Activated CD4-positive, alpha-beta memory T cell treated with anti-CD3 and anti-CD28 coated beads for 36 hours (primary cell): ENCODE measurements at regions of chr17 and their contacts with region 1.

Region 1: DNA sequence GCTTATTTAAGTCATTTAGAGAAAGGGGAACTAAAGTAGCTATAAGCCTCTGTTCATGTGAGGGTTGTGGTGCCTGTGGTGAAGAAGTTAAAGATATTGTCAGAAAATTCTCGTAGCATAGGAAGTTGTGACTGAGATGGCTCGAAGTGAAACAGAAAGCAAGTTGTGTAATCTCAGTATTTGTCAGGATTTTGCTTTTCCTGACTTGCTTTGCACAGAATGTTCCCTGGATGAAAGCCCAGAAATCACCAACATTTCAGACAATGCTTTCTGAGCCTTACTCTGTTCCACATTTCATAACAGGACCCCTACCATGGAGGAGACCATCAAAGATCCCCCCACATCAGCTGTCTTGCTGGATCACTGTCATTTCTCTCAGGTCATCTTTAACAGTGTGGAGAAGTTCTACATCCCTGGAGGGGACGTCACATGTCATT is 10.6 kb downstream of the CALCOCO2 start:
- DNase-seq: peak; percentile 48
- H3K4me3 Mint-ChIP-seq: peak overlapping the region; percentile 46
- H3K27ac Mint-ChIP-seq: peak overlapping the region; percentile 45
- H3K4me1 Mint-ChIP-seq: peaks cover 48% of the 10 kb centered on the region
- H3K27me3 Mint-ChIP-seq: peaks cover 1% of the 10 kb centered on the region

Region 2: DNA sequence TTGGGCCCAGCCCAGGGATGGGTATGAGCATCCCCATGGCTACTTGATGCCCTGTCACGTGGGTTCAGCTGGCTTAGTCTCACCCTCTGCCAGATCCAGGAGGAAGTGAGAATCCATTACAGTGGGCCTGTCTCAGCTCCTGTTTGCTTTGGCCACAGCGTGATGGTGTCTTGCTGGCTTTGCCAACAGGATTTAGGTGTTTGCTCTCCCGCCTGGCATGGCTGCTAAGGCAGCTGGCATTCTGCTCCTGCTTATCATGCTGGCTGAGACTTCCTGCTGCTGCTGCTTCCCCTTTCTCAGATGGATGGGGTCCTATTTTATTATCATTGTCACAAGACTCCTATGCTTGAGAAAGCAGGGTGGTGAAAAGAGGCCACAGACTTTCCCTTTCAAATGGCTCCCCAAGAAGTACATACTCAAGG is 84.6 kb before region 1 on chr17:
- CTCF ChIA-PET with region 1: no interaction called
- POLR2A ChIA-PET with region 1: no interaction called
- intact Hi-C with region 1: no loop called
- DNase-seq: no peak
- H3K4me3 Mint-ChIP-seq: no peak overlapping the region
- H3K27ac Mint-ChIP-seq: no peak overlapping the region
- H3K4me1 Mint-ChIP-seq: peaks cover 13% of the 10 kb centered on the region
- H3K27me3 Mint-ChIP-seq: peaks cover 76% of the 10 kb centered on the region

Region 3: DNA sequence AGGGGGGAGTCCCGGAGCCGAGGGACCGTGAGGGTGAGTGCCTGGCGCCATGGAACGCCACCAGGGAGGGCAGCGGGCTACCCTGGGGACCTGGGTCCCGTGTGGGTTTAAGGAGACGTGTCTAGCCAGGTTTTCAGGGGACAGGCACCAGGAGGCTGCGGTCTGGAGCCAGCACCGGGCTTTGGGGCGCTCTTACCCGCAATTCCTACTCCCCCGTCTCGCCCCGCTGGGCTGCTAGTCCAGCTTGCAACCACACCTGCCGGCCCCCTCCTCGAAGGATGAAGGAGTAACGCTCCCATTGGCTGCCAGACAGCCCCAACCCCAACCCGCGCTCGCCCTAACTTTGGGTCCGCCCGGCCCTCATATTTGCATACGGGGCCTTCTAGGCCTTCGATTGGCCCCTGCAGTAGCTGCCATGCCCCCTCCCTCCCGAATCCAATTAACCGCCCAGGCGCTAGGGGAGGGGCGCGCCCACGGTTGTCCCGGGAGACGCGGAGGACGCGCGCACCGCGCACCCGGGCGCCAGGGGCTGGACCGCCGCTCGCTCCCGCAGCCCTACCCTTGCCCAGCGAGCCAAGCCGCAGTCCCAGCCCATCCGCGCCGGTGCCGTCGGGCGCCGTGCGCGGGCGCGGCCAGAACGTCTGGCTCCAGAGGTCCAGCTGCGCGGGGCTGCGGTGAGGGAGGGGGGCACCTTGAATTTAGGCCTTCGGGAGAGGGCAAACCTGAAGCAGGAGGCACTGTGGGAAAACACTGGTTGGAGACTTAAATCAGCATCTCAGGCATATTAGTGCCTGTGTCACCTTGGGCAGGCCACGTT is 24.4 kb before region 1 on chr17 and contains the start of gene TTLL6:
- CTCF ChIA-PET with region 1: interaction called, 6 read pairs
- POLR2A ChIA-PET with region 1: no interaction called
- intact Hi-C with region 1: loop called (anchors 2 kb)
- DNase-seq: peak; percentile 82
- H3K4me3 Mint-ChIP-seq: peak within 1 kb of the TSS; percentile 60
- H3K27ac Mint-ChIP-seq: no peak within 1 kb of the TSS
- H3K4me1 Mint-ChIP-seq: peaks cover 17% of the 10 kb centered on the region
- H3K27me3 Mint-ChIP-seq: peaks cover 44% of the 10 kb centered on the region
- total RNA-seq, gene TTLL6: not detected

Region 4: GRCh38 chr17:48830840-48831548 is 10.4 kb before region 1 on chr17 and contains the start of gene CALCOCO2:
- CTCF ChIA-PET with region 1: no interaction called
- POLR2A ChIA-PET with region 1: no interaction called
- intact Hi-C with region 1: loop called (anchors 1 kb)
- DNase-seq: peak; percentile 93
- H3K4me3 Mint-ChIP-seq: peak within 1 kb of the TSS; percentile 94
- H3K27ac Mint-ChIP-seq: peak within 1 kb of the TSS; percentile 87
- H3K4me1 Mint-ChIP-seq: peaks cover 42% of the 10 kb centered on the region
- H3K27me3 Mint-ChIP-seq: no peaks in the 10 kb centered on the region
- total RNA-seq, gene CALCOCO2: 65.1 to 72.1 TPM

Region 5: DNA sequence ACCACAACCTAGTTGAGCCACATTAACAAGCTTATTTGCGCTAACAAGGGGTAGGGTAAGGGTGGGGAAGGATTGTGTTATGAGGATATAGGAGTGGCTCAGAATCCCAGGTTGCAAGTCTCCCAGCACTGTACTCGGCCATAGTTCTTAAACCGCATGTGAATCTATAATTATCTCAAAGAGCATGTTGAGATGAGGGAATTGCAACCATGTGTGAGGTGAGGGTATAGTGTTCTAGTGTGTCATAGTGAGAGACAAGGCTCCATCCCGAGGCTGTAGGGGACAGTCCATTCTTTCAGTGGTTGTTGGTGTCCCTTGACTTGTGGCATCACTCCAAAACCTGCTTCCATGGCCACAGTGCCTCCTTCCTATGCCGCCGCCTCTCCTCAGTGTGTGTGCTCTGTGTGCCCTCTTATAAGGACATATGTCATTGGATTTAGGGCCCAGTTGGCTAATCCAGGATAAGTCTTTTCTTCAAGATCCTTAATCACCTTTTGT is 28.5 kb after region 1 on chr17:
- CTCF ChIA-PET with region 1: no interaction called
- POLR2A ChIA-PET with region 1: no interaction called
- intact Hi-C with region 1: no loop called
- DNase-seq: no peak
- H3K4me3 Mint-ChIP-seq: no peak overlapping the region
- H3K27ac Mint-ChIP-seq: no peak overlapping the region
- H3K4me1 Mint-ChIP-seq: no peaks in the 10 kb centered on the region
- H3K27me3 Mint-ChIP-seq: no peaks in the 10 kb centered on the region

Region 6: GRCh38 chr17:48915459-48916282 is 74.3 kb after region 1 on chr17:
- CTCF ChIA-PET with region 1: no interaction called
- POLR2A ChIA-PET with region 1: no interaction called
- intact Hi-C with region 1: loop called (anchors 2 kb)
- DNase-seq: peak; percentile 80
- H3K4me3 Mint-ChIP-seq: peak overlapping the region; percentile 76
- H3K27ac Mint-ChIP-seq: peak overlapping the region; percentile 95
- H3K4me1 Mint-ChIP-seq: peaks cover 61% of the 10 kb centered on the region
- H3K27me3 Mint-ChIP-seq: no peaks in the 10 kb centered on the region